Heart left ventricle (tissue), 16 donors: ENCODE measurements at regions of chr2 and their contacts with region 1.

Region 1: DNA sequence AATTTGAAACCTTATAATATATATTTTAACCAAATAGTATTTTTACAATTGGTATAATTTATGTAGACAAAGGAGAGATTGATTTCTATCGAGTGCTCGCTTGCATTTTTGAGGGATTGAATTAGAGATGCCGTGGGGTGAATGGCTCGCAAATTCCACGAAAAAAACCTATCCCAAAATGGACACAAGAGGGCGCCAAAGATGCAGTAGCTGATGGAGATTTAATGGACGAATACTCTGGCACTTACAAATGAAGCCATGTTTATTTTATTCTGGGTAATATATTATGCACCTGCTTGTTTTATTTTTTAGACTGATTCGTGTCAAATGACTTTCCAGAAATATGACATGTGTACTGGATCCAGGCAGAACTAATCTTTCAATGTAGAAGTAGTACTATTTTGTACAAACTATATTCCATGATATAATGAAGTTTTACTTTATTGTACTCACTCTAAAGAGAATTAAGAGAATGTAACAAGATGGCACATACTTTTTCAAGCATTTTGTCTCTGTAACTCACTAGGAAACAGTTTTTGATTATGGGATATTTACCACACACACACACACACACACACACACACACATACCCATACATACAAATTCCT is 505.4 kb downstream of the PLCL1 start:
- DNase-seq: no peak
- ATAC-seq: no peak
- H3K4me3 ChIP-seq: no peak overlapping the region
- H3K27ac ChIP-seq: no peak overlapping the region
- H3K4me1 ChIP-seq: no peaks in the 10 kb centered on the region
- H3K27me3 ChIP-seq: peaks cover 0 to 35% (median 0%) of the 10 kb centered on the region in 9 donors
- CTCF ChIP-seq: peak; percentile 71 to 89 (median 82)
- POLR2A ChIP-seq: no peak

Region 2: DNA sequence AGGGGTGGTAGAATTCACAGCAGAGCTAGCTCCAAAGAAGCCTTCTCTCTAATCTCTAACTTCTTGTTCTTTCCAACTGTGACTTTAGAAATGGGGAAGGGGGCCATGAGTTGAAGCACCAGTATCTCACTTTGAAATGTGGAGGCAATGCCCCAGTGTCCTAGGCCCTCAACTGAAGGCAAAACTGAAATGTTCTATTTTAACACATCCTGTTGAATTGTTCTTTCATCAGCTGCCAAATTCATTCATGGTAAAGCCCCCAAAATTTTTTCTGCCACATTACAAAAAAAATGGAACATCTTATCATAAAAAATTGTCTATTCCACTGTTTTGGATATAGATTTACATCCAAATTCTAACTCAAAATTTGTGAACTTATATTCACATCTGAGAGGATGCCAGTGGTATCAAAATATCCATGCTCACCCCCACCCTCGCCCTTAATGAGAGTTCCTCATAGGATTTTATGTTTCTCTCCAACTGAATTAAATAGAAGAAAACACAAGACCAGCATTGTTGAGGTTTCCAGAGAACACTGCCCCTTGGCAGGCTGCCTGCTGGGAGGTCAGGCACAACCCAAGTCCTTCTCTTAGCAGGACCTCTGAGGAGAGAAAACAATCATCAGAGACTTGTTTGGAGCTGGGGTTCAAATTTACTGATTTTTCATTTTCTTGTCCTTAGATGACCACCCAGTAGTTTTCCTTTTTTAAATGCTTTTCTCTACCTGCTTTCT is 1235.9 kb before region 1 on chr2:
- intact Hi-C with region 1: loop called in 1 of 10 experiments (anchors 5 kb)
- DNase-seq: peak; percentile 44 to 81 (median 60)
- ATAC-seq: peak in 2 of 4 donors; percentile 28 to 38
- H3K4me3 ChIP-seq: no peak overlapping the region
- H3K27ac ChIP-seq: peak overlapping the region in 1 of 12 donors; percentile 1
- H3K4me1 ChIP-seq: peaks cover 0 to 24% (median 5%) of the 10 kb centered on the region in 12 donors
- H3K27me3 ChIP-seq: no peaks in the 10 kb centered on the region
- CTCF ChIP-seq: no peak
- POLR2A ChIP-seq: no peak

Region 3: DNA sequence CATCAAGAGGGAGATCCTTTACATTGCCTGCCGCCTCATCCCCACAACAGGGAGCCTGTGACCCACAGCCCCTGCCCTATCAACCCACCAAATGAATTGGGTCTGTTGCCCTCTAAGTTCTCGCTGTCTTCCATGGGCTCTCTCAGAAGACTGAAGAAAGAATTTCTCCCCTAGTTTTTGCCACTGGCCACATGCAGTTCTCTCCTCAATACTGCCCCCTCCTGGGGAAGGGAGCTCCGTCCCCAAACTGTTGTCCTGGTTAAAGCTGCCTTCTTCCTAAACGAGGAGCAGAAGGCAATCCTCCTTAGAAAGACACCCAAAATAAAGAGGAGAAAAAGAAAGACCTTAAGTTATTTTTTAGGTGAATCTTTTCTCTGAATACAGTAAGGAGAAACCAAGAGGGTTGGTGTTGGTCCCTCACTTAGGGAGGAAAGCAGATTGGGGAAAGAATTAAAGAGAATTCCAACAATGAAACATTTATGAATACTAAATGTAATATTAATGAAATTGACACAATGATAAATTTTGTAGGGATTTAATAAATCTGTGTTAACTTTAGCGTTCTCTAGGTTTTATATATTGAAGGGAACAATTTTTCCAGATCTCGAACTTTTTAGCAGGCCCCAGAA is 1179.1 kb after region 1 on chr2:
- intact Hi-C with region 1: loop called in 8 of 10 experiments (anchors 5 to 10 kb)
- DNase-seq: no peak
- ATAC-seq: no peak
- H3K4me3 ChIP-seq: no peak overlapping the region
- H3K27ac ChIP-seq: no peak overlapping the region
- H3K4me1 ChIP-seq: no peaks in the 10 kb centered on the region
- H3K27me3 ChIP-seq: peaks cover 0 to 37% (median 5%) of the 10 kb centered on the region in 9 donors
- CTCF ChIP-seq: peak; percentile 38 to 72 (median 54)
- POLR2A ChIP-seq: no peak

Region 4: DNA sequence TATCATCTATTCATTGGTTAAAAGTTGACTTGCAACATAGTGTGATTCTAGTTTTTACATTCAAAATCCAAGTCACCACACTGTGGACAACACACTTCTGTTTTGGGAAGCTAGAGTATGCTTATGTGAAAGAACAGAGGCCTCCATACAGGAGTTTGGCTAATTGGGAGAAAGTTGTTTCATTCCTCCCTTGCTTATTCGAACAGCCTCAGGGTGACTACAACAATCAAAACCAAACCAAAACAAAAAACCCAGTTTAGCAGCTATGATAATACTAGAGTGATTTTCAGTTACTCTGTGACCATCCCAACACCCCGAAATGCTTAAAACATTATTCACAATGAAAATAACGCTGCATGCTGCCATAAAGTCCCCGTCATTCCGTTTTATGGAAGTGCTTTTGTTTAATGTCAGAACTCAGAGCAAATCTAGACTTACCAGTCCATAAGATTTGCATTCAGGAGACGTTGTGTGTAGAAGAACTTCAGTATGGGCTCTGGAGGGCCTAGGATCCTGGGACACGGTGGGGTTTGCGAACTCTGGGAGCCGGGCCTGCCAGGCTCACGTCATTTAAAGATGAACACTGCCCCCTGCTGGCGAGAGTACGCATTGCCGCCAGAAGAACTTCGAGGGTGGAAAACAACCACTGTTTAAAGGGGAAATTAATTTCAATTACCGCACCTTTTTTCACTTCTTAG is 1429.8 kb after region 1 on chr2:
- intact Hi-C with region 1: loop called in 8 of 10 experiments (anchors 2 to 10 kb)
- DNase-seq: peak; percentile 21 to 83 (median 43)
- ATAC-seq: peak in 1 of 4 donors; percentile 56
- H3K4me3 ChIP-seq: peak overlapping the region in 1 of 12 donors; percentile 13
- H3K27ac ChIP-seq: peak overlapping the region in 1 of 12 donors; percentile 40
- H3K4me1 ChIP-seq: peaks cover 0 to 17% (median 0%) of the 10 kb centered on the region in 12 donors
- H3K27me3 ChIP-seq: peaks cover 0 to 37% (median 6%) of the 10 kb centered on the region in 9 donors
- CTCF ChIP-seq: peak; percentile 81 to 96 (median 93)
- POLR2A ChIP-seq: no peak

Region 5: DNA sequence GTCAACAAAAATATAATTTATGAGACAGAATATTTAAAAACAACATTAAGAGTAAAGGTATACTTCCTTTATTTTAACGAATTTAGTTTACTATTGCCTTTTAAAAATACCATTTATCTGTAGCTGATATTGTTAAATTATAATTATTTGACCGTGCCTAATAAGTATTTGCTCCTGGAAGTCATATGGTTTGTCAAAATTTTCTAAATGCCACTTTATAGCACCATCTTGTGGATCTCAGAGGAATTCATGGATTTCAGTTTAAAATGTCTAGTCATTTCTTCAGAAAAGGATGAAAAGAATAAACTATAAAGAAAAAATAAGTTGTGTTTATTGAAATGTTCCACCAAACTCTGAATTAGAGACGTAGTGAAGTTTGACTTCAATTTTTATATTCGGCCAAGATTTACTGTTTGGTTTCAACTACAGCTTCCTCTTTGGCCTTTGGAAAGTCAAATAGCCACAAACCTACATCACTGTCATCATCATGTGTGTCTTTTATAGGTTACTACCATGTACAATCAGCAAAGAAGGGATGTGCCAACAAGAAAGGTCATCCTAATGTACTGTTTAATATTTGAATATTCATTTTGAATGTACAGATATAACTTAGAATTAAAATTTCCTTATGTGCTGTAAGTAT is 1551.5 kb after region 1 on chr2:
- intact Hi-C with region 1: loop called in 1 of 10 experiments (anchors 5 kb)
- DNase-seq: no peak
- ATAC-seq: no peak
- H3K4me3 ChIP-seq: no peak overlapping the region
- H3K27ac ChIP-seq: no peak overlapping the region
- H3K4me1 ChIP-seq: no peaks in the 10 kb centered on the region
- H3K27me3 ChIP-seq: peaks cover 0 to 15% (median 0%) of the 10 kb centered on the region in 9 donors
- CTCF ChIP-seq: peak in 11 of 12 donors; percentile 7 to 59 (median 40)
- POLR2A ChIP-seq: no peak